Dendritic cell treated with granulocyte-macrophage colony-stimulating factor and Interleukin-4, amounts not matched to agents 40 ng/mL and 50 ng/mL, for 4 days (primary cell): ENCODE measurements at regions of chr1 and their contacts with region 1.

Region 1: GRCh38 chr1:28877132-28877781 is 37.1 kb upstream of the EPB41 start:
- H3K4me3 Mint-ChIP-seq: no peak overlapping the region
- H3K27ac Mint-ChIP-seq: no peak overlapping the region
- H3K4me1 Mint-ChIP-seq: peaks cover 6% of the 10 kb centered on the region
- H3K27me3 Mint-ChIP-seq: no peaks in the 10 kb centered on the region

Region 2: GRCh38 chr1:28518000-28518744 is 359.1 kb before region 1 on chr1:
- intact Hi-C with region 1: loop called (anchors 5 kb)
- H3K4me3 Mint-ChIP-seq: peak overlapping the region; percentile 86
- H3K27ac Mint-ChIP-seq: peak overlapping the region; percentile 41
- H3K4me1 Mint-ChIP-seq: peaks cover 27% of the 10 kb centered on the region
- H3K27me3 Mint-ChIP-seq: no peaks in the 10 kb centered on the region

Region 3: GRCh38 chr1:28648474-28649198 is 228.6 kb before region 1 on chr1 and contains the start of gene RNU11:
- intact Hi-C with region 1: loop called (anchors 2 kb)
- H3K4me3 Mint-ChIP-seq: peak within 1 kb of the TSS; percentile 78
- H3K27ac Mint-ChIP-seq: peak within 1 kb of the TSS; percentile 97
- H3K4me1 Mint-ChIP-seq: peaks cover 38% of the 10 kb centered on the region
- H3K27me3 Mint-ChIP-seq: no peaks in the 10 kb centered on the region

Region 4: DNA sequence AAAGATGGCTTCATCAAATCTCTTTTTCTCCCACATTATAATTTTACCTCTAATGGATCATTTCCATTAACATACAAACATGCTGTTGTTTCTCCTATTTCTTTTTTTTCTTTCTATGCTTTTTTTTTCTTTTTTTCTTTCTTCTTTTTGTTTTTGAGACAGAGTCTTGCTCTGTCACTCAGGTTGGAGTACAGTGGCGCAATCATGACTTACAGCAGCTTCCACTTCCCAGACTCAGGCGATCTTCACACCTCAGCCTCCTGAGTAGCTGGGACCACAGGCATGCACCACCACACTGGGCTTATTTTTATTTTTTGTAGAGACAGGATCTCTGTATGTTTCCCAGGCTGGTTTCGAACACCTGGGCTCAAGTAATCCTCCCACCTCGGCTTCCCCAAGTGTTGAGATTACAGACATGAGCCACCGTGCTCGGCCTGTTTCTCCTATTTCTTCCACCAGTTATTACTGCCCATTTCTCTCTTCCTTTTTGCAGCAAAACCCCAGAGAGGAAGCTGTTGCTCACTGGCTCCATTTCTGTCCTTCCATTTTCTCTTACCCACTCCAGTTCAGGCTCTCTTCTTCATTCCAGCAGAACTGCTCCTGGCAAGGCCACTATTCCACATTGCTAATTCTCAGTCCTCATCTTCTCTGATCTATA is 97.4 kb before region 1 on chr1:
- intact Hi-C with region 1: loop called (anchors 1 kb)
- H3K4me3 Mint-ChIP-seq: no peak overlapping the region
- H3K27ac Mint-ChIP-seq: peak overlapping the region; percentile 69
- H3K4me1 Mint-ChIP-seq: peaks cover 46% of the 10 kb centered on the region
- H3K27me3 Mint-ChIP-seq: no peaks in the 10 kb centered on the region